ENCODE measurements at regions of chr9 and their contacts with region 1.

Region 1: GRCh38 chr9:122453677-122454135 is 24.0 kb downstream of the OR1J1 start:
- DNase-seq: no peak
- H3K4me3 ChIP-seq: no peak overlapping the region
- H3K27ac ChIP-seq: no peak overlapping the region
- H3K4me1 ChIP-seq: no peaks in the 10 kb centered on the region
- H3K27me3 ChIP-seq: no peaks in the 10 kb centered on the region
- CTCF ChIP-seq: no peak
- EP300 ChIP-seq: no peak
- POLR2A ChIP-seq: no peak

Region 2: DNA sequence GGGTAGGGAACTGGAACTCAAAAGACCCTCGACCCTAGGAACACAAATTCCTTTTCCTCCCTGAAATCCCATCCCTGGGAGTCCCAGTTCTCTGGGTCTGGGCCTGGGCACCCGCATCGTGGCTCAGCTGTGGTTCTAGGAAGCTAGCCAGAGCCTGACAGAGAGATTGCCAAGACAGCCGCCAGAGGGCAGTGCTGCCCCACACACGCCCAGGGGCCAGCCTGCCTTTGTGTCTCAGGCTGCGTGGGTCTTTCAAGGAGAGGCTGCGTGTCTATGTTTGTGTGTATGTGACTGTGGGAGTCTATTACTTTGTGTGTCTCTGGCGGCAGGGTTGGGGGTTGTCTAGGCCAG is 328.6 kb before region 1 on chr9:
- intact Hi-C with region 1: loop called (anchors 2 kb)
- DNase-seq: no peak
- H3K4me3 ChIP-seq: no peak overlapping the region
- H3K27ac ChIP-seq: no peak overlapping the region
- H3K4me1 ChIP-seq: peaks cover 32 to 36% (median 33%) of the 10 kb centered on the region in 4 donors
- H3K27me3 ChIP-seq: peaks cover 0 to 23% (median 2%) of the 10 kb centered on the region in 4 donors
- CTCF ChIP-seq: peak; percentile 95 to 98 (median 96)
- EP300 ChIP-seq: no peak
- POLR2A ChIP-seq: no peak

Region 3: GRCh38 chr9:122389799-122390481 is 63.8 kb before region 1 on chr9:
- intact Hi-C with region 1: no loop called
- DNase-seq: peak; percentile 60
- H3K4me3 ChIP-seq: no peak overlapping the region
- H3K27ac ChIP-seq: peak overlapping the region; percentile 5 to 39 (median 23)
- H3K4me1 ChIP-seq: peaks cover 5 to 33% (median 24%) of the 10 kb centered on the region in 4 donors
- H3K27me3 ChIP-seq: no peaks in the 10 kb centered on the region
- CTCF ChIP-seq: no peak
- EP300 ChIP-seq: no peak
- POLR2A ChIP-seq: no peak

Region 4: DNA sequence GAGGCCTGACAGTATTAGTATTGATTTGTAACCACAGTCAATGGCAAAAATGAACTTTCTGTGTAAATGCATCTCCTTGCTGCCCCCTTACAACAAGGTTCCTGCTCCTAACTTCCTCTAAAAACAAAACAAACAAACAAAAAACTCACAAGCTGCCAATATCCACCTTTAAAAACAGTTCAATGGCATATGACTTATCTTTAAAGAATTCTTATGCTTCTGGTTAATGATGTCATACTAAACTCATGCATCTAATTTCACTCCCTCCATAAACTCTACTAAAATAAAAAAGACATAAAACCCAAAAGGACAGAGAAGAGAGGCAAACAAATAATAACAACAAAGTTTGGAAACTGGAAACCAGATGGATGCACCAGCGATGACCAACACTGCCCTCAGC is 82.4 kb after region 1 on chr9:
- intact Hi-C with region 1: no loop called
- DNase-seq: no peak
- H3K4me3 ChIP-seq: no peak overlapping the region
- H3K27ac ChIP-seq: no peak overlapping the region
- H3K4me1 ChIP-seq: no peaks in the 10 kb centered on the region
- H3K27me3 ChIP-seq: no peaks in the 10 kb centered on the region
- CTCF ChIP-seq: no peak
- EP300 ChIP-seq: no peak
- POLR2A ChIP-seq: no peak